Endothelial cell of umbilical vein (primary cell): ENCODE measurements at regions of chr16 and their contacts with region 1.

Region 1: GRCh38 chr16:31142109-31143010 is 6.8 kb upstream of the PRSS8 start:
- DNase-seq: peak; percentile 99
- H3K4me3 ChIP-seq: peak overlapping the region in 2 of 3 experiments; percentile 6 to 23
- H3K27ac ChIP-seq: peak overlapping the region; percentile 30
- H3K4me1 ChIP-seq: peaks cover 13% of the 10 kb centered on the region
- H3K27me3 ChIP-seq: peaks cover 5 to 13% of the 10 kb centered on the region in 2 experiments
- CTCF ChIP-seq: peak; percentile 98 to 99
- POLR2A ChIP-seq: peak; percentile 29

Region 2: DNA sequence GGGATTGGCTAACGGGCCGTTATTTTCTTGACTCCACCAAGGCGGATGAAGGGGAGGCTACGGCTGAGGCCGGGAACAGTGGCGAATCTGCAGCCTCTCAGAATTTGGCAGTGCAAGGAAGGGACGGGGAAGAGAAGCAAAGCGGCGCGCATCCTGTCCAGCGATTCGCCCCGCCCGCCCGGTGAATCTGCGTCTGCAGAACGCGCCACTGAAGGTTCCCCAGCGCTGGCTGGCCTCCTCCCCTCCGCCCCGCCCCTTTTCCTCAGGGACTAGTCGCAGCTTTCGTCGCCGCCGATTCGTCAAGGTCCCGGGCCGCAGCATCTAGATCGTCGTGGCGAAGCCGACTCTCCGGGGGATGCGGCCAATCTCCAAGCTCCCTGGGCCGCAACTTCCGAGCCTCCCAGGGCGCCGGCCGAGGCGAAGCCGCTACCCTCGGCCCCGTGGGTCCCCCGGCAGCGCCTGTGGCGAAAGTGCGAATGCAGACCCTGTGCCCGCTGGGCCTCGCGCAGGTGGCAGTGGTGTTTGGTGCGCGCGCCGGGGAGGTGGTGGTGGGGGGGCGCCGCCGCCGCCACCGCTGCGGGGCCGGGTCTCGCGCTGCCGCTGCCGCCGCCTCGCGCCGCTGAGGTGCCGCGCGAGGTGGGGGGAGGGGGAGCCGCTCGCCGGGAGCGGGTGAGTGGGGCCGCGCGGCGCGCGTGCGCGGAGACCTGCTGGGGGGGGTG is 184.7 kb before region 1 on chr16 and contains the start of gene SETD1A:
- CTCF ChIA-PET with region 1: interaction called, 25 read pairs
- POLR2A ChIA-PET with region 1: no interaction called
- dilution Hi-C with region 1: no loop called
- intact Hi-C with region 1: loop called (anchors 1 kb)
- DNase-seq: peak; percentile 90
- H3K4me3 ChIP-seq: peak within 1 kb of the TSS; percentile 60 to 71 (median 67)
- H3K27ac ChIP-seq: peak within 1 kb of the TSS; percentile 100
- H3K4me1 ChIP-seq: peaks cover 12% of the 10 kb centered on the region
- H3K27me3 ChIP-seq: no peaks in the 10 kb centered on the region
- CTCF ChIP-seq: no peak
- POLR2A ChIP-seq: no peak
- total RNA-seq, gene SETD1A: 21.3 and 25.6 TPM in 2 replicates

Region 3: DNA sequence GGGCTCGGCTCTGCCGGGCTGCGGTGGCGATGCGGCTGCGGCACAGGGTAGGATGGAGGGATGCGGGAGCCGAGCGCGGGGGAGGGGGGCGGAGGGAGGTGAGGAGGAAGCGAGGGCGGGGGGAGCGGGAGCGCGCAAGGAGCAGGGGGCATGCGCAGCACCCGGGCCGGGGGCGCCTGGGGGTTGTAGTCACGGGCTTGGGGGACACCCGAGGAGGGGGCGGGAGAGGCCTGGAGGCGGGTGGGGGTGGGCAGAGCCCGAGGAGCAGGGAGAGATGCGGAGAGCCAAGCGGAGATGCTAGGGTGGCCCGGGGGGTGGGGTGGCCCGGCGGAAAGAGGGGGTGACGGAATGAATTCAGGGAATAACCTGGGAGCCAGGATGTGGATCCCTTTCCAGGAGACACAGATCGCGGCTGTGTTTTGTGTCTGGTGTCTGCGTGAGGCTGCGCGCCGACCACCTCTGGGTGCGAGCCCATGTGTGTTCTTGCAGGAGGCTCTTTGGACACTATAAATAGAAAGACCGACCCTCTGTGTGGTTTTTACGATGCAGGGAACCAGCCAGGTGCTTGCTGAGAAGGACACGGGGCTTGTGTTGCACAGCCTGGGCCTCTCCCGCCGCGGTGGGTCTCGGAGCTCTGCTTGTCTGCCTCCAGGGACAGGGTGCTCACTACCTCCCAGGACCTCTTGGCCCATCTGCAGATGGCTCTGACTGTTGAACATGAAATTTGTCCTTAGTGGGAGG is 131.6 kb before region 1 on chr16 and contains the start of gene STX1B:
- CTCF ChIA-PET with region 1: no interaction called
- POLR2A ChIA-PET with region 1: no interaction called
- dilution Hi-C with region 1: no loop called
- intact Hi-C with region 1: no loop called
- DNase-seq: no peak
- H3K4me3 ChIP-seq: no peak within 1 kb of the TSS
- H3K27ac ChIP-seq: no peak within 1 kb of the TSS
- H3K4me1 ChIP-seq: no peaks in the 10 kb centered on the region
- H3K27me3 ChIP-seq: peaks cover 17 to 32% of the 10 kb centered on the region in 2 experiments
- CTCF ChIP-seq: no peak
- POLR2A ChIP-seq: no peak
- total RNA-seq, gene STX1B: 0.07 and 0.11 TPM in 2 replicates

Region 4: DNA sequence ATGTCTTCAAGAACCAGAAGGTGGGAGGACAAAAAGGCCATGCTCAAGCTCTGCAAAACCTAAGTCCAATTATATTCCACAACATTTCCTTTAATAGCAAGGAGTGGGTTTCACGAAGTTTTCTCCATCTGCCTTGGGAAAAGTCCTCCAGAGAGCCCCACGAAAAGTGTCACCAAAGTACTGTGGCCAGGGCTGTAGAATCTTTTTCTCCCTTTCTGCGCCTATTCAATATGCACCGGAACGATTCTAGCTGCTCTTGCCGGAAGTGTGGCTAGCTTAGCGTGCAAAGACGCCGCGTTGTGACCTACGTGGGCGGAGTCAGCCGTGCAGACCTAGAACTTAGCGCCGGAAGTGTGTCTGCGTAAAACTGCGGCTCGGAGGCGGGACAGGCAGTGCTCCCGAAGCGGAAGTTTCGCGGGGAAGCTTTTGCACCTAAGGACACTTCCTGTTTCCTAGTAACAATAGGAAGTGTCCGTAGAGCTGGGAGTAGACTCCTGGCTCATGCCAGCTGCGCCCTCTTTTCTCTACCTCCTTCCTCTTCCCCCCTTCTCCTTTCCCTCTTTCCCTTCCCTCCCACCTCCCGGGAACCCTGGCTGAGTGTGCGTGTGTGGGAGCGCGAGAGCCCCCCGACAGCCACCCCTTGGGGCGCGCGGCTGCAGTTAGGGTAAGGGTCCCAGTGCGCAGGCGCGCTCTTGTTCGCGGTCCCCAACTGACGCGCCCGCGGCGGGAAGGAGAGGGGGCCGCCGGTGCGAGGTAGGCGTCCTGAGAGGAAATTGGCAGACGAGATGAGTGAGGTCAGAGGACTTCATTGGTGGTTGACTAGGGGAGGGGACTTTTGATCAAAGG is 68.2 kb before region 1 on chr16 and contains the starts of genes ZNF646 and ZNF668:
- CTCF ChIA-PET with region 1: interaction called, 15 read pairs
- POLR2A ChIA-PET with region 1: interaction called, 5 read pairs
- dilution Hi-C with region 1: no loop called
- intact Hi-C with region 1: loop called (anchors 1 kb)
- DNase-seq: peak; percentile 99
- H3K4me3 ChIP-seq: peak within 1 kb of the TSS; percentile 68 to 87 (median 87)
- H3K27ac ChIP-seq: peak within 1 kb of the TSS; percentile 86
- H3K4me1 ChIP-seq: peaks cover 14% of the 10 kb centered on the region
- H3K27me3 ChIP-seq: no peaks in the 10 kb centered on the region
- CTCF ChIP-seq: no peak
- POLR2A ChIP-seq: peak; percentile 84
- total RNA-seq, gene ZNF646: 13.1 and 15.9 TPM in 2 replicates
- total RNA-seq, gene ZNF668: 11.6 and 13.3 TPM in 2 replicates

Region 5: DNA sequence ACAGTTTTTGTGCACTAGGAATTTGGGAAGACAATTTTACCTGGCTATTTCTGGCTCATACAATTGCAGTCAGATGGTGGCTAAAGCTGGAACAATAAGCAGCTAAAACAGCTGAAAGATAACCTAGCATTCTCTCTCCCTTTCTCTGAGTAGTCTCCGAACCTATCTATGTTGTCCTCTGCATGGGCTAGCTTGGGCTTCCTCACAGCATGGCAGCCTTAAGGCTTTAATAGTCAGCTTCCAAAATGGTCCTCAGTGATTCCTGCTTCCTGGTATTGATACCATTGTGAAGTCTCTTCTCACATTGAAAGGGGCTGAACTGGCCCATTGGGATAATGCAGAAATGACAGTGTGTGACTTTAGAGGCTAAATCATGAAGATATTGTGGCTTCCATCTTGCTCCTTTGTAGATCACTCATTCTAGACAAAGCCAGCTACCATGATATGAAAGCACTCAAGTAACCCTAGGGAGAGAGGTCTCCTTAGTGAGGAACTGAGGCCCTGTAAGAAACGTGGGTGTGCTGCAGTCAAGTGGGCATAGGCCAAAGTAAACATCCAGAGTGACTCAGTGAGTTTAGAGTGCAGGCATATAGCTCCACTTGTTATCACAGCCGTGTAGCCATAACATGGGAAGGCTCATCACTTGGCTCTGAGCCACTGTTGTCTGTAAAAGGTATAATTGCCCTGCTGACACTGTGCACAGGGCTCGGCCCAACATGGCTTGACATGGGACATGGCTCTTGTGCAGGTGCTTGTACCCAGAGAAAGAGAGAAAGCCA is 42.3 kb before region 1 on chr16:
- CTCF ChIA-PET with region 1: interaction called, 12 read pairs
- POLR2A ChIA-PET with region 1: no interaction called
- dilution Hi-C with region 1: no loop called
- intact Hi-C with region 1: loop called (anchors 5 kb)
- DNase-seq: peak; percentile 18
- H3K4me3 ChIP-seq: no peak overlapping the region
- H3K27ac ChIP-seq: no peak overlapping the region
- H3K4me1 ChIP-seq: no peaks in the 10 kb centered on the region
- H3K27me3 ChIP-seq: no peaks in the 10 kb centered on the region
- CTCF ChIP-seq: no peak
- POLR2A ChIP-seq: no peak

Region 6: GRCh38 chr16:31117391-31118197 is 24.8 kb before region 1 on chr16 and contains the start of gene KAT8:
- CTCF ChIA-PET with region 1: interaction called, 27 read pairs
- POLR2A ChIA-PET with region 1: interaction called, 31 read pairs
- dilution Hi-C with region 1: no loop called
- intact Hi-C with region 1: loop called (anchors 1 kb)
- DNase-seq: peak; percentile 98
- H3K4me3 ChIP-seq: peak within 1 kb of the TSS; percentile 54 to 79 (median 79)
- H3K27ac ChIP-seq: peak within 1 kb of the TSS; percentile 77
- H3K4me1 ChIP-seq: peaks cover 7% of the 10 kb centered on the region
- H3K27me3 ChIP-seq: no peaks in the 10 kb centered on the region
- CTCF ChIP-seq: no peak
- POLR2A ChIP-seq: peak; percentile 84
- total RNA-seq, gene KAT8: 42.1 and 42.8 TPM in 2 replicates

Region 7: GRCh38 chr16:31179747-31180459 is 37.5 kb after region 1 on chr16 and contains the start of gene FUS:
- CTCF ChIA-PET with region 1: interaction called, 20 read pairs
- POLR2A ChIA-PET with region 1: interaction called, 37 read pairs
- dilution Hi-C with region 1: no loop called
- intact Hi-C with region 1: loop called (anchors 1 kb)
- DNase-seq: peak; percentile 90
- H3K4me3 ChIP-seq: peak within 1 kb of the TSS; percentile 77 to 100 (median 95)
- H3K27ac ChIP-seq: peak within 1 kb of the TSS; percentile 91
- H3K4me1 ChIP-seq: peaks cover 22% of the 10 kb centered on the region
- H3K27me3 ChIP-seq: no peaks in the 10 kb centered on the region
- CTCF ChIP-seq: no peak
- POLR2A ChIP-seq: peak; percentile 100
- total RNA-seq, gene FUS: 569 and 574 TPM in 2 replicates

Region 8: DNA sequence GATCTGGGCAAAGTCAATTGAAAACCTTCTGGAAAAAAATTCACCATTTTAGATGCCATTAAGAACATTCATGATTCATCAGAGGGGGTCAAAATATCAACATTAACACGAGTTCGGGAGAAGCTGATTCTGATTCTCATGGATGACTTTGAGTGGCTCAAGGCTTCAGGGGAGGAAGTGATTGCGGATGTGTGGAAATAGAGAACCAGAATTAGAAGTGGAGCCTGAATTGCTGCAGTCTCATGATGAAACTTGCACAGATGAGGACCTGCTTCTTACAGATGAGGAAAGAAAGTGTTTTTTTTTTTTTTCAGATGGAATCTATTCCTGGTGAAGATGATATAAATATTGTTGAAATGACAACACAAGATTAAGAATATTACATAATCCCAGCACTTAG is 225.5 kb after region 1 on chr16:
- CTCF ChIA-PET with region 1: no interaction called
- POLR2A ChIA-PET with region 1: no interaction called
- dilution Hi-C with region 1: no loop called
- intact Hi-C with region 1: no loop called
- DNase-seq: no peak
- H3K4me3 ChIP-seq: no peak overlapping the region
- H3K27ac ChIP-seq: no peak overlapping the region
- H3K4me1 ChIP-seq: no peaks in the 10 kb centered on the region
- H3K27me3 ChIP-seq: no peaks in the 10 kb centered on the region
- CTCF ChIP-seq: no peak
- POLR2A ChIP-seq: no peak

Region 9: GRCh38 chr16:31873556-31874365 is 731.4 kb after region 1 on chr16 and contains the start of gene ZNF267:
- CTCF ChIA-PET with region 1: interaction called, 5 read pairs
- POLR2A ChIA-PET with region 1: no interaction called
- dilution Hi-C with region 1: no loop called
- intact Hi-C with region 1: loop called (anchors 1 kb)
- DNase-seq: peak; percentile 91
- H3K4me3 ChIP-seq: peak within 1 kb of the TSS; percentile 83 to 99 (median 95)
- H3K27ac ChIP-seq: peak within 1 kb of the TSS; percentile 89
- H3K4me1 ChIP-seq: peaks cover 52% of the 10 kb centered on the region
- H3K27me3 ChIP-seq: no peaks in the 10 kb centered on the region
- CTCF ChIP-seq: no peak
- POLR2A ChIP-seq: peak; percentile 93
- total RNA-seq, gene ZNF267: 19.1 and 21.9 TPM in 2 replicates